ENCODE measurements at regions of chr1 and their contacts with region 1.

Region 1: DNA sequence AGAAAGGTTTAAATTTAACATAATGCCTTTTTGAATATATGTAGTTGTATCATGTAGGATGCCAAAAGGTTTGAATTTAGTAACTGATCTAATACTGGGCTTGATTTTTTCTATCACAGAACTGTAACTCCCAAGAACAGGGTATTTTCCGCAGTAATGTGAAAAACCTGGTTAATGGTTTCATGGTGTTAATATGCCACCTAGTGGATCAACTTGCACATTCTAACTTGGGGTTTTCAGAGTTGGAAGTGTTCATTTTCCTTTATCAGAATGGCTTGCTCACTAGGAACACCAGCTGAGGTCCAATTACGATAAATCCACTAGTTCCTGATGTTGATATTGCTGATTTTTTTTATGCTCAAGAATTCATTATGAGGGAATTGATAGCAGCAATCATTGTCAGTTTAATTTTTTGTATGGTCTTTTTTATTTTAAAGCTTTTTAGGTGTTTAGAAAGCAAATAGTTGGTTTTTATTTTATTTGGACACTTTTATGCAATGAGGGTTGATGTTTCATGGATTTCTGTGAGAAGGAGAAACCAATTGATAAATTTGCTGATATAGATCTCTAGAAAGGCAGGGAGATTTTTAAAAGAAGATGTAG is 157.2 kb downstream of the PLA2G4A start:
- DNase-seq: peak; percentile 90
- H3K4me3 ChIP-seq: no peak overlapping the region
- H3K27ac ChIP-seq: peak overlapping the region; percentile 76
- H3K4me1 ChIP-seq: peaks cover 16% of the 10 kb centered on the region
- H3K27me3 ChIP-seq: no peaks in the 10 kb centered on the region
- CTCF ChIP-seq: peak; percentile 45 to 48
- POLR2A ChIP-seq: no peak

Region 2: DNA sequence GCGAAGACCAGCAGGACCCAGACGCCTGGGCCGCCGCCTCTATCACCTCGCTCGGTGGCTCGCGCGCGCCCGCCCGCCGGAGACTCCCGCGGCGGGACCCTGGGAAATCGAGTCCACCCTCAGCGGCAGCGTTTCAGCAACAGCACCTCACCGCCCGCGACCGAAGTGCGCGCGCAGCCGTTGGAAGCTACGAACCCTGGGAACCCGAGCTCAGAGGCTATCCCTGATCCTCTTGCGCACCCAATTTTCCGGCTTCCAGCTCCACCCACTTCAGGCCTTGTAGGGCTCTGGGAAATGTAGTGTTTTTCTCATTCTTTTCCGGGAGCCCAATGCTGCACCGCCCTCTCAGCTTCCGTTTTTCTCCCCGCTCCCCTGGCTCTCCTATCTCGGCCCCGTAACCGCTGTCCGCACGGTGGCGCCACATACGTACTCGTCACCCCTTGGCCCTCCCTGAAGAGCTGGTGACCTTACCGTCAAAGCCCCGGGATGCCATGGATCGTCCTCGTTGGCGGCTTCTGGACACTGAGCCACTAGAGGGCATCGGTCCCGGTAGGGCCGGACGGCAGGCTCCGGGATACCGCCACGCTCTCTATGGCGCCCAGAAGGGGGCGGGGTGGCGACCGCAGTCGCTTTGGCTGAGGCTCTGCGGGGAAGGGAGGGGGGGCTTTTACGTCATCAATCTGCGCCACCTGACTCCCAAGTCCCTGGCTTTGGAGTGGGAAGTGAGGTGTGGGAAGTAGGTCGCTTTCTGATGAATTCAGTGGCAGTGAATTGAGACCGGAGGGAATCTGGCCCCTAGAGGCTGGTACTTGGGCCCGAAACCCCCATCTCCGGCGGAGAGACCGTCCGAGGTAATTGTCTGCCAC is 610.7 kb before region 1 on chr1 and contains the starts of genes ODR4 and TPR:
- CTCF ChIA-PET with region 1: interaction called, 25 read pairs
- POLR2A ChIA-PET with region 1: no interaction called
- dilution Hi-C with region 1: no loop called
- intact Hi-C with region 1: loop called (anchors 1 kb)
- DNase-seq: peak; percentile 99
- H3K4me3 ChIP-seq: peak within 1 kb of the TSS; percentile 65 to 91 (median 68)
- H3K27ac ChIP-seq: peak within 1 kb of the TSS; percentile 63
- H3K4me1 ChIP-seq: peaks cover 18% of the 10 kb centered on the region
- H3K27me3 ChIP-seq: no peaks in the 10 kb centered on the region
- CTCF ChIP-seq: peak; percentile 90 to 98
- POLR2A ChIP-seq: peak; percentile 83
- total RNA-seq, gene ODR4: 17.3 and 18.6 TPM in 2 replicates
- total RNA-seq, gene TPR: 107 and 118 TPM in 2 replicates

Region 3: DNA sequence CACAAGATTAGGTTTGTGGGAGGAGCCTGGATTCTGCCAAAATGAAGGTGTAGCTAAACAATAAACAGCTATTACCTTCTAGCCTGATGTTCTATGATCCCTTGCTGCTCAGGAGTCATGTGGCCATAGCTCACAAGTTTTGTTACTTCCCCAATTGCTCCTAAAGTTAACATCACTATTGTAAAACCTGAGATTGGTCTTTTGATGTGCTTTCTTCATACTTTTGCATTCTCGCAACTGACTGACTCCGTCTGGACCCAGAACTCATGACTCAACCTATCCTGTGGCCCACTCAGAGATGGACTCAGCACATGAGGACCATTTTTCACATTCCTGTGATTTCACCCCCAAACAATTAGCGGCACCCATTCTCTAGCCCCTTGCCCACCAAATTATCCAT is 374.8 kb before region 1 on chr1:
- CTCF ChIA-PET with region 1: interaction called, 46 read pairs
- POLR2A ChIA-PET with region 1: no interaction called
- dilution Hi-C with region 1: no loop called
- intact Hi-C with region 1: no loop called
- DNase-seq: no peak
- H3K4me3 ChIP-seq: no peak overlapping the region
- H3K27ac ChIP-seq: no peak overlapping the region
- H3K4me1 ChIP-seq: no peaks in the 10 kb centered on the region
- H3K27me3 ChIP-seq: no peaks in the 10 kb centered on the region
- CTCF ChIP-seq: no peak
- POLR2A ChIP-seq: no peak

Region 4: GRCh38 chr1:186763107-186763506 is 222.9 kb before region 1 on chr1:
- CTCF ChIA-PET with region 1: interaction called, 3 read pairs
- POLR2A ChIA-PET with region 1: no interaction called
- dilution Hi-C with region 1: no loop called
- intact Hi-C with region 1: loop called (anchors 5 kb)
- DNase-seq: peak; percentile 96
- H3K4me3 ChIP-seq: no peak overlapping the region
- H3K27ac ChIP-seq: peak overlapping the region; percentile 92
- H3K4me1 ChIP-seq: peaks cover 20% of the 10 kb centered on the region
- H3K27me3 ChIP-seq: no peaks in the 10 kb centered on the region
- CTCF ChIP-seq: no peak
- POLR2A ChIP-seq: no peak

Region 5: DNA sequence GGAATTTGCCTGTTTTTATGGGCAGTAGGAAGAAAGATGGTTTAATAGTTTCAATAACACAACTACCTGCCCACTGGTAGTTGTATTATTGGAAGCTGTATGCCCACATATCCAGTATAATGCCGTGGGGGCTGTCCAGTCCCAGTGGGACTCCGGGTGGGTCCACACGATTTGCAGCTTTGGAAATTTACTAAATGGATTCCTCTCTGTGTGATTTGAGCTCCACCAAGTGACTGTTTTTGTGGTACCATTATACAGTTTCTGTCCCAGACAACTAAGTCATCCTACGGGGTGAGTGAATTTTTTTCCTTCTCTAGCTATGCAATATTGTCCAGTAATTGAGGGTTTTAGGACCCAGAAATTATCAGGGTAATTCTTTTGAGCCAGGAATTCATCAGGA is 70.4 kb before region 1 on chr1:
- CTCF ChIA-PET with region 1: interaction called, 48 read pairs
- POLR2A ChIA-PET with region 1: no interaction called
- dilution Hi-C with region 1: no loop called
- intact Hi-C with region 1: loop called (anchors 1 kb)
- DNase-seq: peak; percentile 20
- H3K4me3 ChIP-seq: no peak overlapping the region
- H3K27ac ChIP-seq: no peak overlapping the region
- H3K4me1 ChIP-seq: peaks cover 20% of the 10 kb centered on the region
- H3K27me3 ChIP-seq: no peaks in the 10 kb centered on the region
- CTCF ChIP-seq: no peak
- POLR2A ChIP-seq: no peak

Region 6: GRCh38 chr1:186974774-186975181 is 11.2 kb before region 1 on chr1:
- CTCF ChIA-PET with region 1: interaction called, 27 read pairs
- POLR2A ChIA-PET with region 1: no interaction called
- dilution Hi-C with region 1: no loop called
- intact Hi-C with region 1: no loop called
- DNase-seq: peak; percentile 98
- H3K4me3 ChIP-seq: peak overlapping the region in 1 of 3 experiments; percentile 12
- H3K27ac ChIP-seq: peak overlapping the region; percentile 93
- H3K4me1 ChIP-seq: peaks cover 49% of the 10 kb centered on the region
- H3K27me3 ChIP-seq: no peaks in the 10 kb centered on the region
- CTCF ChIP-seq: no peak
- POLR2A ChIP-seq: peak; percentile 28

Measured in endothelial cell of umbilical vein (primary cell).